A673 (cell line): ENCODE measurements at regions of chr6 and their contacts with region 1.

Region 1: GRCh38 chr6:73854998-73855718 is 159.2 kb downstream of the CD109 start:
- DNase-seq: peak; percentile 83
- H3K4me3 ChIP-seq: no peak overlapping the region
- H3K27ac ChIP-seq: no peak overlapping the region
- H3K4me1 ChIP-seq: peaks cover 8% of the 10 kb centered on the region
- H3K27me3 ChIP-seq: no peaks in the 10 kb centered on the region
- CTCF ChIP-seq: peak; percentile 79

Region 2: DNA sequence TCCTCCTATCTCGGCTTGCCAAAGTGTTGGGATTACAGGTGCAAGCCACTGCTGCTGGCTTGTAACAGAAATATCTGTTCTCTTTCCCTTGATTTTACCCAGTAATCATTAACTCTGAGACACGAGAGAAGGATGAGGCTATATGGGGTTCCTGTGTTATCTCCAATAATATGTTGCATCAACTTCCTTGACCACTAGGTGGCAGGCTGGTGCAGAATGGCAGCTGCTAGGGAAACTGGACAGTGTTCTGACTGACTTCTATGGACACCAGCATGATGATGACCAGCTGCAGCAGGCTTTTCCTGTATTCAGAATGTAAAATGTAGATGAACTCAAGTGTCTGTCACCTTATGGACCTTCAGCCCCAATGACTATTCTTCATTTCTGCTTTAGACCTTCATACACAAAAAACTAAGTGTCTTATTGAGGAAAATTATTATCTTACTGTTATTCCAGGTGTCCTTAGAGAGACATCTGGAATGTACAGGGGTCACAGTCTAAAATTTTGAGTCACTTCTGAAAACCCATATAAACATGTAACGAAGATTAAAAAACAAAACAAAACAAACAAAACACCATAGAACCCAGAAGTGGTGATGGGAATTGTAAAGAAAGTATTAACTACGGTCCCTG is 179.6 kb before region 1 on chr6:
- CTCF ChIA-PET with region 1: no interaction called
- POLR2A ChIA-PET with region 1: no interaction called
- intact Hi-C with region 1: no loop called
- DNase-seq: peak; percentile 76
- H3K4me3 ChIP-seq: no peak overlapping the region
- H3K27ac ChIP-seq: no peak overlapping the region
- H3K4me1 ChIP-seq: no peaks in the 10 kb centered on the region
- H3K27me3 ChIP-seq: no peaks in the 10 kb centered on the region
- CTCF ChIP-seq: peak; percentile 88

Region 3: DNA sequence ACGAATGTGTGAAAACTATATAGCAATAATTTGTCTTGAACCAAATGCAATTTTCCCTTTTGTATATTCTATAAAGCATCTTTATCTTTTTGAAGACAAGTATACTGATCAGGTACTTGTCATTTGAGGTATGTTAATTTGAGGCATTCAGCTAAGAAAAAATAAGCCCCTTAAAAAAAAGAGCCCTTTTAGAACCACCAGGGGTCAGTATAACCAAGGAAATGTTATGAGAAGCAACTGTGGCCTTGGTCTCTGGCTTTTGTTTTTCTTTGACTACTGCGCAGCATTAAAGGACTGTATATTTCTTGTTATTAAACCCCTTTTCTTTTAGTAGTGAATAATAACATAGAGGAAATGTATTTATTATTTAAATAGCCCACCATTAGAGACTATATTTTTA is 116.1 kb before region 1 on chr6:
- CTCF ChIA-PET with region 1: no interaction called
- POLR2A ChIA-PET with region 1: no interaction called
- intact Hi-C with region 1: loop called (anchors 2 kb)
- DNase-seq: peak; percentile 83
- H3K4me3 ChIP-seq: no peak overlapping the region
- H3K27ac ChIP-seq: no peak overlapping the region
- H3K4me1 ChIP-seq: no peaks in the 10 kb centered on the region
- H3K27me3 ChIP-seq: no peaks in the 10 kb centered on the region
- CTCF ChIP-seq: peak; percentile 82

Region 4: GRCh38 chr6:73898624-73899023 is 43.5 kb after region 1 on chr6:
- CTCF ChIA-PET with region 1: no interaction called
- POLR2A ChIA-PET with region 1: no interaction called
- intact Hi-C with region 1: loop called (anchors 1 kb)
- DNase-seq: peak; percentile 29
- H3K4me3 ChIP-seq: no peak overlapping the region
- H3K27ac ChIP-seq: no peak overlapping the region
- H3K4me1 ChIP-seq: peaks cover 8% of the 10 kb centered on the region
- H3K27me3 ChIP-seq: no peaks in the 10 kb centered on the region
- CTCF ChIP-seq: peak; percentile 44; the same call in 1 of the 2 replicates

Region 5: GRCh38 chr6:74091136-74091793 is 236.1 kb after region 1 on chr6:
- CTCF ChIA-PET with region 1: no interaction called
- POLR2A ChIA-PET with region 1: no interaction called
- intact Hi-C with region 1: loop called (anchors 10 kb)
- DNase-seq: peak; percentile 75
- H3K4me3 ChIP-seq: no peak overlapping the region
- H3K27ac ChIP-seq: no peak overlapping the region
- H3K4me1 ChIP-seq: no peaks in the 10 kb centered on the region
- H3K27me3 ChIP-seq: no peaks in the 10 kb centered on the region
- CTCF ChIP-seq: peak; percentile 81